ENCODE measurements at regions of chr7 and their contacts with region 1.

Region 1: DNA sequence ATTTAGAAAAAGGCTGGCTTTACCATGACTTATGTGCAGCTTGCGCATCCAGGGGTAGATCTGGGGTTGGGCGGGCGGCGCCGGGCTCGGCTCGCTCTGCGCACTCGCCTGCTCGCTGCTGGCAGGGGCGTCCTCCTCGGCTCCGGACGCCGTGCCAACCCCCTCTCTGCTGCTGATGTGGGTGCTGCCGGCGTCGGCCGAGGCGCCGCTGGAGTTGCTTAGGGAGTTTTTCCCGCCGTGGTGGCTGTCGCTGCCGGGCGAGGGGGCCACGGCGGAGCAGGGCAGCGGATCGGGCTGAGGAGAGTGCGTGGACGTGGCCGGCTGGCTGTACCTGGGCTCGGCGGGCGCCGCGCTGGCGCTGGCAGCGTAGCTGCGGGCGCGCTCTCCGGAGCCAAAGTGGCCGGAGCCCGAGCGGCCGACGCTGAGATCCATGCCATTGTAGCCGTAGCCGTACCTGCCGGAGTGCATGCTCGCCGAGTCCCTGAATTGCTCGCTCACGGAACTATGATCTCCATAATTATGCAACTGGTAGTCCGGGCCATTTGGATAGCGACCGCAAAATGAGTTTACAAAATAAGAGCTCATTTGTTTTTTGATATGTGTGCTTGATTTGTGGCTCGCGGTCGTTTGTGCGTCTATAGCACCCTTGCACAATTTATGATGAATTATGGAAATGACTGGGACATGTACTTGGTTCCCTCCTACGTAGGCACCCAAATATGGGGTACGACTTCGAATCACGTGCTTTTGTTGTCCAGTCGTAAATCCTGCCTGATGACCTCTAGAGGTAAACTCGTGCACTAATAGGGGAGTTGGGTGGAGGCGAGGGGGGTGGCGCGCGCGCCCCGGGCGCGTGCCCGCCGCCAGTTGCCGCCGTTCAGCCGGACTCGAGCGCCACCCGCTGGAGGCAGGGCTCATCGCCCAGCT is at the start of gene HOXA5:
- DNase-seq: peak in 1 of 2 donors; percentile 87
- H3K4me3 ChIP-seq: peak within 1 kb of the TSS; percentile 29
- CTCF ChIP-seq: peak in 1 of 3 donors; percentile 30
- POLR2A ChIP-seq: no peak
- total RNA-seq, gene HOXA5: 5.1 to 15.1 (median 6.1) TPM

Region 2: GRCh38 chr7:25739143-25739542 is 1404.1 kb before region 1 on chr7:
- intact Hi-C with region 1: no loop called
- DNase-seq: no peak
- H3K4me3 ChIP-seq: no peak overlapping the region
- CTCF ChIP-seq: no peak
- POLR2A ChIP-seq: no peak

Region 3: DNA sequence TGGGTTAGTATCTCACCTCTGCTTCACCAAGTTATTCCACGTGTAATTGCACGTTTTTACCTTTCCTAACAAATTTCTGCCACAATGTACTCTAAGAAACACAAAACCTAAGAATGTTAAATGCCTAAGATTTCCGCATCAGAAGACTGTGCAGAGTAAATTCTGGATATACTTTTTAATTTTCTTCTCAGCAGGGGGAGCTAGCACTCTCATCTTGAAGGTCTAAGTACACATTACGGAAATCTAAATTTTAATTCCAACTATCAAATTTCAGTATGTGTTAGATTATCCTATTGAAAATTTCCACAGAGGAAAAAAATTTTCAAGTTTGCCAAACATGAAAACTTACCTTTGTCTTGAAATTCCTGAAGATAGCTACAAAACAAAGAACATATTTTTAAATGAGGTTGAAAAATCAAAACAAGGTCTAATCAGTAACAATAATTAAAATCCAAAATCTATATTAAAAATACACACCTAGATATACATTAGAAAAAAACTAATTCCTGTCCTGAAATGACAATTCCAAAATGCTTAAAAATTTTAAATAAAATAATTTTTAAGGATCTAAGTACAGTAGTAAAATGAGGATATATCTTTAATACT is 289.4 kb before region 1 on chr7:
- intact Hi-C with region 1: loop called (anchors 5 kb)
- DNase-seq: no peak
- H3K4me3 ChIP-seq: no peak overlapping the region
- CTCF ChIP-seq: no peak
- POLR2A ChIP-seq: no peak

Measured in lower leg skin (tissue), 4 donors.